HepG2 (cell line): ENCODE measurements at regions of chr6 and their contacts with region 1.

Region 1: GRCh38 chr6:54980511-54981275 is 134.1 kb downstream of the FAM83B start:
- DNase-seq: no peak
- ATAC-seq: no peak
- H3K4me3 ChIP-seq: no peak overlapping the region
- H3K27ac ChIP-seq: no peak overlapping the region
- H3K4me1 ChIP-seq: no peaks in the 10 kb centered on the region
- H3K27me3 ChIP-seq: no peaks in the 10 kb centered on the region
- CTCF ChIP-seq: no peak
- EP300 ChIP-seq: no peak
- POLR2A ChIP-seq: no peak
- RAD21 ChIP-seq: no peak

Region 2: DNA sequence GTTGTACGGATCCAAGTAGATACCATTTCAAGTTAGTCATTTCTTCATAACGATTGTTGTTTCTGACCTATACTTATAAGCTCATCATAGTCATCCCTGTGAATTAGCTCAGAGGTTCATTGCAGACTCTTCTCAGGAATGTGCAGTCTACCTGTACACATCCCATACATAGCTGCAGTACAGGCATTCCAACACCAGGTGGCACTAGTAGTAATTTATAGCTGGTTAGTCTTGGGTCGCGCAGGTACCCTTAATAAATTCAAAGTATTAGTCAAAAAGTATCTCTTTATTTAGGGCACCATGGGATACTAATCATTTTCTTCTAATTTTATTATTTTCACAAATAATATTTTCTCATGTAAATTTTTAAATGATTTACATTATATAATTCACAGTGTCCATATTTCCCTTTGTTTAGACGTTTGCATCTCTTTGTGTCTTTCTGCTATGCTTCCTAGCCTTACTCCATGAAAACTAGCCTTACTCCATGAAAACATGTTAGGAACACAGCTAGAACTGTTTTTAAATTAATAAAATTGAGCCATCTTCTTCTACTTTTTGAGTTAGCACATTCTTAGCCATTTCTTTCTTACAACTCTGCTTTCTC is 262.7 kb before region 1 on chr6:
- CTCF ChIA-PET with region 1: no interaction called
- POLR2A ChIA-PET with region 1: no interaction called
- in situ Hi-C with region 1: no loop called
- intact Hi-C with region 1: no loop called
- DNase-seq: peak; percentile 77
- ATAC-seq: peak; percentile 92
- H3K4me3 ChIP-seq: no peak overlapping the region
- H3K27ac ChIP-seq: no peak overlapping the region
- H3K4me1 ChIP-seq: no peaks in the 10 kb centered on the region
- H3K27me3 ChIP-seq: no peaks in the 10 kb centered on the region
- CTCF ChIP-seq: peak; percentile 76
- EP300 ChIP-seq: no peak
- POLR2A ChIP-seq: no peak
- RAD21 ChIP-seq: no peak; the same call in 1 of the 2 replicates

Region 3: GRCh38 chr6:54935739-54936138 is 45.0 kb before region 1 on chr6:
- CTCF ChIA-PET with region 1: no interaction called
- POLR2A ChIA-PET with region 1: no interaction called
- in situ Hi-C with region 1: no loop called
- intact Hi-C with region 1: loop called (anchors 5 kb)
- DNase-seq: no peak
- ATAC-seq: no peak
- H3K4me3 ChIP-seq: no peak overlapping the region
- H3K27ac ChIP-seq: no peak overlapping the region
- H3K4me1 ChIP-seq: peaks cover 5% of the 10 kb centered on the region; the same call in 1 of the 2 replicates
- H3K27me3 ChIP-seq: no peaks in the 10 kb centered on the region
- CTCF ChIP-seq: no peak
- EP300 ChIP-seq: no peak
- POLR2A ChIP-seq: no peak
- RAD21 ChIP-seq: no peak